ENCODE measurements at regions of chr22 and their contacts with region 1.

Region 1: GRCh38 chr22:37316875-37317371 is 34.6 kb downstream of the CYTH4 start:
- DNase-seq: peak; percentile 93
- CTCF ChIP-seq: peak; percentile 94

Region 2: DNA sequence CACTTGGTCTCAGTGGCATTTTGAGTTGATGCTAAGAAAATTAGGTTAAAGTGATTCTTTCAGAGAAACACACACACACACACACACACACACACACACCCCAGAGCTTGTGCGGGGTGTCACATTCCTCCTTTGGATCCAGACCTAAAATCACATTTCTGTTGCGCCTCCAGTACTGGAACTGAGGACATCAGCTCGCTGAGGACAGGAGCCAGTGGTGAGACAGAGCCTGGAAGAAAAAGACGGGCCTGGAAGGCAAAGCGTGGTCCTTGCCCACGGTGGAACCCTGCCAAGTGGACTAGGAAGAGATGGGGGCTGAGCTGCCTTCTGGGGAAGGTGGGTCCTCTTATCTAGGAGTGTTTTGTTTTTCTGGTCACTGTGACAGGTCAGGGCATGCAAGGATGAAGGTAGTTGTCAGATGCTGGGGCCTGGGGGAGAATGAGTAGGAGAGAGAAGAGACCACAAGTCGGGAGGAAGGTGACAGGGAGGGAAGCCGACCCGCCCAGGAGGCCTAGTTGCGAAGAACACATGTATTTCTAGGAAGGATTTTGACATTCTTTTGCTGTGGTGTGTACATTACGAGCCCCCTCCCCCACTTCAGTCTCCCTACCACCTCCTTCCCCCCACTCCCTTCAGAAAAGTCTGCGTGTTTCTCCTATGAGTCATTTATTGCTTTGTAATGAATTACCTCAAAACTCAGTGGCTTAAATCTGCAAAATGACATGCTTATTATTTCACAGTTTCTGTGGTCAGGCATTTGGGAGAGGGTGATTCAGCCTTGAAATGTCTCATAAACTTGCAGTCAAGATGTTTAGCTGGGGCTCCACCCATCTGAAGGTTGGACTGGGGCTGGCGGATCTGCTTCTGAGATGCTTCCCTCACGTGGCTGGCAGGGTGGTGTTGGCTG is 115.1 kb after region 1 on chr22:
- in situ Hi-C with region 1: loop called (anchors 10 kb)
- DNase-seq: no peak
- CTCF ChIP-seq: no peak

Region 3: DNA sequence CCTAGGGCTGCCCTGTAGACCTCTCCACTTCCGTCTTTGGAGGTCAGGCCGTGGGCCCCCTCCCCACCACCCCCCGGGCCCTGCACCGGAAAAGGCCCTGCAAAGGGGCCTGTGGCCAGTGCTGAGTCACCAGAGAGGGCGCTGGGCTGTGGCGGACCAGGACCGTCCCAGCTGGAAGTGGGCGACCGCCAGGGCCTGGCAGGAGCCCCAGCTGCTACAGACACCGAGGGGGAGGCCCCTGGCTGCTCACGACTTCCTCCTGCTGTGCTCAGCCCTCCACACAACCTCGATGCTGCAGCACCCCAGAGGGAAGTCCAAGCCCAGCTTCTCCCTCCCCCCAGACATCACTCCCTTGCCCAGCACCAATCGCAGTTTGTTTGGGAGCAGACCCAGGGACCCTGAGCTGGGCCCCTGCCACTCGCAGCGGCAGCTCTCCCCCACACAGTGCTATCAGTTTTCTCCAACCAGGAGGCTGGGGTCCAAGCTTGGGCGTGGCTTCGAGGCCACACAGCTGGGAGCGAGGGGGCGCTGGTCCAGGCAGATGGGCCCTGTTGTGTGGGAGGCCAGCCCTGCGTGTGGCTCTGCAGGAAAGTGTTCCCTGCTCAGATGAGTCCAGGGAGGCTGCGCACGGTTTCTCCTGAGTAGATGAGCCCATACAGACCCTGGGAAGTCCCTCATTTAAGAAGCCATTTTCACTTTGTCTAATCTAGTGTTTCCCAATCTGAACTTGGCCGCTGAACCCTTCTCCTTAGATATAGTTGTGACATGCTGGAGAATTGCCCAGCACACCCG is 316.9 kb after region 1 on chr22:
- in situ Hi-C with region 1: no loop called
- DNase-seq: peak; percentile 93
- CTCF ChIP-seq: peak; percentile 27

Measured in GM13976 (cell line).